ENCODE measurements at regions of chr17 and their contacts with region 1.

Region 1: DNA sequence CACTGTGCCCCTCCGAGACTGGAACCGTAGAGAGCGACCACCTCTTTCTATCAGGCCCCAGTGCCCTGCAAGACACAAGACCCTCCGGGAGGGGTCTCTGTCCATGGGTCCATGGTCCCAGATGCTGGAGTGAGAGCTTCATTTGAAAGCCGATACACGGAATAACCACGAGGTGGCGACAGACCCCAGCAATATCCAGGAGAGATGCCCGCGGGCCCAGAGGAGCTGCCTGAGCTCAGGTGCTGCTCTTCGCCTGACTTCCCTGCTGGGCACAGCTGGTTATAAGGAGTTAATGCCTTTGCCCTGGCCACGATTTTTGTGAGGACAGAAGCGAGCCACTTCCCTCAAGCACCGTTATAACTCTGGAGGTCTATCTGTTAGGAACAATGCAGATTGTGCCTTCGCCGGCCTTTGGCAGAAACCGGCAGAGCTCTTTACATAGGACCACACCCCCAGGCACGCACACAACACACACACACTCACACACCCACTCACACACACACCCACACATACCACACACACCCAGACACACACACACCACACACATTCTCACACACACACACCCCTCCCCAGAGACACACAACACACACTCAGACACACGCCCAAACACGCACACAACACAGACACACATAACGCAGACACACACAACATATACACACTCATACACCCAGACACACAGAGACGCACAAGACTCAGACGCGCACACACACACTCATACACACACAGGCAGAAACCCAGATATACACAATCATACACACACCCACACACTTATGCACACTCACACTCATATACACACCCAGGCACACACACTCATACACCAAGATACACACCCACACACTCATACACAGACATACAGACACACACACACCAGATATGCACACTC is 436.4 kb downstream of the SOX9 start:
- DNase-seq: no peak
- ATAC-seq: peak; percentile 78
- H3K4me3 ChIP-seq: no peak overlapping the region
- H3K27ac ChIP-seq: no peak overlapping the region
- H3K4me1 ChIP-seq: no peaks in the 10 kb centered on the region
- H3K27me3 ChIP-seq: no peaks in the 10 kb centered on the region
- CTCF ChIP-seq: peak; percentile 82 to 85 (median 83)
- EP300 ChIP-seq: no peak
- POLR2A ChIP-seq: no peak
- RAD21 ChIP-seq: peak; percentile 79

Region 2: DNA sequence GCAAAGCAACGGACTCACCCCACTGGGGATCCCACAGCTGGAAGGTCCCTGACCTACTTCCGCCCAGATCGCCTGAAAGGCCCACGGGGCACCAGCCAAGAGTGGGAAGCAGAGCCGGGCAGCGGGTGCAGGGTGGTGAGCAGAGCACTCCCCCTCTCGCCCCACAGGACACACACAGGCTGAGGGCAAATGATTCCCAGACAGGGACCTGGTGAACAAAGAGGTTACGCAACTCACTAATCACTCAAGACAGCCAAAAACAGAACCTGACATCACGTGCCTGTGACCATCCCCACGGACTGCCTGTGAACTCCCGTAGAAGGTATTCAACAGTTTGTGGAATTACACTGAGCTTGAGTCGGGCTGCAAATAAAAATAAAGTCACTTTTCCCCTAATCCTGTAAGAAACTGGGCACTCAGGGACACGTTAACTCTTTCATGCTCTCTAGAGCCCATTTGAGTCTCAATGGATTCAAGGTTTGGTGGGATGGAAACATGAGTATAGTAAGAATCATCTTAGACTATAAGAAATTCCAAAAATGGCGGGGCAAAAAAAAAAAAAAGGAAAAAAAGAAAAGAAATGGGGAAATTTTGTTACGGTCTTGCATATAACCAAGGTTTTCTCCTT is 40.3 kb before region 1 on chr17:
- CTCF ChIA-PET with region 1: interaction called, 10 read pairs
- POLR2A ChIA-PET with region 1: no interaction called
- RAD21 ChIA-PET with region 1: interaction called, 4 read pairs
- SMC1A ChIA-PET with region 1: no interaction called
- in situ Hi-C with region 1: no loop called
- intact Hi-C with region 1: no loop called
- DNase-seq: no peak
- ATAC-seq: peak; percentile 53
- H3K4me3 ChIP-seq: no peak overlapping the region
- H3K27ac ChIP-seq: peak overlapping the region; percentile 84
- H3K4me1 ChIP-seq: peaks cover 56% of the 10 kb centered on the region
- H3K27me3 ChIP-seq: no peaks in the 10 kb centered on the region
- CTCF ChIP-seq: peak in 2 of 3 experiments; percentile 8 to 37; a peak in 1 of 6 replicates
- EP300 ChIP-seq: no peak
- POLR2A ChIP-seq: no peak
- RAD21 ChIP-seq: no peak

Region 3: GRCh38 chr17:72592242-72592966 is 35.2 kb after region 1 on chr17:
- CTCF ChIA-PET with region 1: interaction called, 66 read pairs
- POLR2A ChIA-PET with region 1: interaction called, 7 read pairs
- RAD21 ChIA-PET with region 1: interaction called, 10 read pairs
- SMC1A ChIA-PET with region 1: interaction called, 34 read pairs
- in situ Hi-C with region 1: no loop called
- intact Hi-C with region 1: loop called (anchors 2 kb)
- DNase-seq: no peak
- ATAC-seq: peak; percentile 82
- H3K4me3 ChIP-seq: peak overlapping the region; percentile 59
- H3K27ac ChIP-seq: no peak overlapping the region
- H3K4me1 ChIP-seq: 0 out of 2 replicates have a peak, but pooled peaks cover 3% of the 10 kb centered on the region
- H3K27me3 ChIP-seq: no peaks in the 10 kb centered on the region; a peak in 2 of 4 replicates
- CTCF ChIP-seq: no peak
- EP300 ChIP-seq: no peak
- POLR2A ChIP-seq: peak; percentile 90
- RAD21 ChIP-seq: no peak

Region 4: DNA sequence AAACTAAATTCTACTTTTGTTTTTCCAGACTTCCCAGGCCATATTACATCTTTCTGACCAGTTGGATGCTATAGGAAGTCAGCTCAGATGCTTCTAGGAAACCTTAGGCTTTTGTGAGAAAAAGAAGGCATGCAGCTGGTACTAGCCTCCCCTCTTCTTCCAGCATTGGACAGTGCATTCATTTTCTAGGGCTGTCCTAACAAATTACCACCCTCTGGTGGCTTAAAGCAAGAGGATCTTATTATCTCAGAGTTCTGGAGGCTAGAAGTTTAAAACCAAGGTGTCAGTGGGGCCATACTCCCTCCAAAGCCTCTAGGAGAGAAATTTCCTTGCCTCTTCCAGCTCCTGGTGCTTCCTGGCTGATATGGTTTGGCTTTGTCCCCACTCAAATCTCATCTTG is 67.5 kb after region 1 on chr17:
- CTCF ChIA-PET with region 1: interaction called, 10 read pairs
- POLR2A ChIA-PET with region 1: no interaction called
- RAD21 ChIA-PET with region 1: no interaction called
- SMC1A ChIA-PET with region 1: interaction called, 23 read pairs
- in situ Hi-C with region 1: no loop called
- intact Hi-C with region 1: loop called (anchors 5 kb)
- DNase-seq: no peak
- ATAC-seq: no peak
- H3K4me3 ChIP-seq: no peak overlapping the region
- H3K27ac ChIP-seq: no peak overlapping the region
- H3K4me1 ChIP-seq: no peaks in the 10 kb centered on the region
- H3K27me3 ChIP-seq: no peaks in the 10 kb centered on the region; a peak in 1 of 4 replicates
- CTCF ChIP-seq: no peak
- EP300 ChIP-seq: no peak
- POLR2A ChIP-seq: no peak
- RAD21 ChIP-seq: no peak

Region 5: GRCh38 chr17:72683506-72684404 is 126.6 kb after region 1 on chr17:
- CTCF ChIA-PET with region 1: interaction called, 7 read pairs
- POLR2A ChIA-PET with region 1: interaction called, 4 read pairs
- RAD21 ChIA-PET with region 1: interaction called, 11 read pairs
- SMC1A ChIA-PET with region 1: interaction called, 4 read pairs
- in situ Hi-C with region 1: no loop called
- intact Hi-C with region 1: no loop called
- DNase-seq: no peak
- ATAC-seq: no peak
- H3K4me3 ChIP-seq: no peak overlapping the region
- H3K27ac ChIP-seq: no peak overlapping the region
- H3K4me1 ChIP-seq: no peaks in the 10 kb centered on the region
- H3K27me3 ChIP-seq: no peaks in the 10 kb centered on the region
- CTCF ChIP-seq: no peak
- EP300 ChIP-seq: no peak
- POLR2A ChIP-seq: no peak
- RAD21 ChIP-seq: no peak

Region 6: GRCh38 chr17:72985881-72986720 is 428.9 kb after region 1 on chr17:
- CTCF ChIA-PET with region 1: interaction called, 34 read pairs
- POLR2A ChIA-PET with region 1: no interaction called
- RAD21 ChIA-PET with region 1: interaction called, 16 read pairs
- SMC1A ChIA-PET with region 1: interaction called, 8 read pairs
- in situ Hi-C with region 1: no loop called
- intact Hi-C with region 1: loop called (anchors 1 kb)
- DNase-seq: peak; percentile 47
- ATAC-seq: peak; percentile 99
- H3K4me3 ChIP-seq: no peak overlapping the region
- H3K27ac ChIP-seq: no peak overlapping the region; the same call in 1 of the 2 replicates
- H3K4me1 ChIP-seq: peaks cover 10% of the 10 kb centered on the region
- H3K27me3 ChIP-seq: no peaks in the 10 kb centered on the region
- CTCF ChIP-seq: peak; percentile 84 to 88 (median 88)
- EP300 ChIP-seq: no peak
- POLR2A ChIP-seq: no peak
- RAD21 ChIP-seq: peak; percentile 81

Region 7: DNA sequence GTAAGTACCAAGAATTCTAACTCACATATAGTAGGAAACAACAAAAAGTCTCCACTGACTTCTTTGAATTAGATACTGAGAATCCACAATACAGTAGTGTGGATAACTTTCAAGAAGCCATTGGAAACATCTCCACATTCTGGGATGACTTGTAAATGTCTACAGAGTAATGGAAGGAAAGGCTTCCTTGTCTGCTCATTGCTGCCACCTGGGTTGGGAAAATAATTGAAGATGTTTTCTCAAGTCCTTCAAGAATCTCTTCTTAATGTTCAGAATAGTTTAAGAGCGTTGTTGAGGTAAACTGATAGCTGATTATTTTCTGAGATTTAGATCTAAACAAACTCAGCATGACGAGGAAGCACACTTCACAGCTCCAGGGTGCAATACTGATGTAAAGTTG is 690.5 kb after region 1 on chr17:
- CTCF ChIA-PET with region 1: interaction called, 11 read pairs
- POLR2A ChIA-PET with region 1: no interaction called
- RAD21 ChIA-PET with region 1: interaction called, 6 read pairs
- SMC1A ChIA-PET with region 1: interaction called, 6 read pairs
- in situ Hi-C with region 1: no loop called
- intact Hi-C with region 1: no loop called
- DNase-seq: no peak
- ATAC-seq: no peak
- H3K4me3 ChIP-seq: no peak overlapping the region
- H3K27ac ChIP-seq: no peak overlapping the region
- H3K4me1 ChIP-seq: no peaks in the 10 kb centered on the region
- H3K27me3 ChIP-seq: no peaks in the 10 kb centered on the region
- CTCF ChIP-seq: peak in 1 of 3 experiments; percentile 32; a peak in 1 of 6 replicates
- EP300 ChIP-seq: no peak
- POLR2A ChIP-seq: no peak
- RAD21 ChIP-seq: no peak